ENCODE measurements at regions of chr2 and their contacts with region 1.

Region 1: DNA sequence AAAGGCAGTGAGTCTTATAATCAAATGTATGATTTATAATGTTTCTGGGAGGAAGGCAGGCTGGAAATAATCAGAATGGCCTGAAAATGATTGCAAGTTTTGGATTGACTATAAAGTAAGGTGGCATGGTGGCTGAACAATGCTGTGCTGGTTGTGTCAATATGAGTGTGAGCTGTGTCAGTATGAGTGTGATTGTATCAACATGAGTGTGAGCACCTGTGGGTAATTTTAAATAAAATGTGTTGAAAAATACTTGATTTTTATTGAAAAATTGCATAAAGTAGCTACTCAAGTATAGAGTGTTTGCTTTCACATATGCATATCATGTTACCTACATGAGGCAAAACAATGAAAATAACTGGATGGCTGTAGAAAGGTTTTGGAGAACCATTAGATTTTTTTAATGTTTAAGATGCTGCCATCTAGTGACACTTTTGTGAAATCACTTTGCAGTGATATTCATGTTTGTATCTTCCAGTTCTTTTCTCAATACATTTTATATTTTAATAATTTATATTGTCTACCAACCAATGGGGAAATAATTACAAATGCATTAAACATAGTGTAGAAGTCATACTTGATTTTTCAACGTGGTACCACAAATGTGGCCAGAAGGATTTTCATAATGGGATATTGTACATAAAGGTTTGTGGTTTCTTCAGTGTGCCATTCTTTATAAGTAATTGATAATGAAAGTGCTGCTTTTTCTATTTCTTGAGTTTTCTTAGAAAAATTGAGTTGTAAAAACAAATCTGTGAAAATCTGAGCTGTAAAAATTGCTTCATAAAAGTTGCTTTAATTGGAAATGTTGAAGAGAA is 103.3 kb downstream of the KYNU start:
- DNase-seq: peak; percentile 53
- H3K4me3 ChIP-seq: no peak overlapping the region
- H3K27ac ChIP-seq: no peak overlapping the region
- H3K4me1 ChIP-seq: peaks cover 2% of the 10 kb centered on the region
- H3K27me3 ChIP-seq: no peaks in the 10 kb centered on the region
- CTCF ChIP-seq: peak; percentile 18 to 25
- POLR2A ChIP-seq: no peak

Region 2: DNA sequence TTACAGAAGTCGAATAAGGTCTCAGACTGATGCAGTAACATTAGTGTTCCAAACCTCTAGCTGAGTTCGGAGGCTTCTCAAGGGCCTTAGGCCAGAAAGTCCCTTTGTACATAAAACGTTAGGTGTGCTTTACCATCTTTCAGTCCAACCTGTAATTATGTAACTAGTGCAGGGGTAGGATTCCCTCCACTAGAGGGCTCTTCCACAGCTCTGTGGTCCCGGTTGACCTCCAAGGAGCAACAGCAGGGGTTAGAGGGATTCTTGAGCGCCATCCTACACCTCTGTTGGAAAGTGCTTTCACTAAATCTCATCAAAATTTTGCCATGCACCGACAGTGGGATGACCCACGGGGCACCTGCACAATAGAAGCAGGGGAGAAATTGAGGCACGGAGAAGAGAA is 694.2 kb before region 1 on chr2:
- CTCF ChIA-PET with region 1: no interaction called
- POLR2A ChIA-PET with region 1: no interaction called
- dilution Hi-C with region 1: no loop called
- intact Hi-C with region 1: loop called (anchors 5 kb)
- DNase-seq: no peak
- H3K4me3 ChIP-seq: no peak overlapping the region
- H3K27ac ChIP-seq: no peak overlapping the region
- H3K4me1 ChIP-seq: no peaks in the 10 kb centered on the region
- H3K27me3 ChIP-seq: no peaks in the 10 kb centered on the region
- CTCF ChIP-seq: peak; percentile 10 to 24
- POLR2A ChIP-seq: no peak

Region 3: GRCh38 chr2:142682528-142682927 is 298.2 kb before region 1 on chr2:
- CTCF ChIA-PET with region 1: interaction called, 100 read pairs
- POLR2A ChIA-PET with region 1: no interaction called
- dilution Hi-C with region 1: no loop called
- intact Hi-C with region 1: loop called (anchors 1 kb)
- DNase-seq: peak; percentile 46
- H3K4me3 ChIP-seq: no peak overlapping the region
- H3K27ac ChIP-seq: no peak overlapping the region
- H3K4me1 ChIP-seq: no peaks in the 10 kb centered on the region
- H3K27me3 ChIP-seq: peaks cover 0 to 3% of the 10 kb centered on the region in 2 experiments
- CTCF ChIP-seq: no peak
- POLR2A ChIP-seq: no peak

Region 4: DNA sequence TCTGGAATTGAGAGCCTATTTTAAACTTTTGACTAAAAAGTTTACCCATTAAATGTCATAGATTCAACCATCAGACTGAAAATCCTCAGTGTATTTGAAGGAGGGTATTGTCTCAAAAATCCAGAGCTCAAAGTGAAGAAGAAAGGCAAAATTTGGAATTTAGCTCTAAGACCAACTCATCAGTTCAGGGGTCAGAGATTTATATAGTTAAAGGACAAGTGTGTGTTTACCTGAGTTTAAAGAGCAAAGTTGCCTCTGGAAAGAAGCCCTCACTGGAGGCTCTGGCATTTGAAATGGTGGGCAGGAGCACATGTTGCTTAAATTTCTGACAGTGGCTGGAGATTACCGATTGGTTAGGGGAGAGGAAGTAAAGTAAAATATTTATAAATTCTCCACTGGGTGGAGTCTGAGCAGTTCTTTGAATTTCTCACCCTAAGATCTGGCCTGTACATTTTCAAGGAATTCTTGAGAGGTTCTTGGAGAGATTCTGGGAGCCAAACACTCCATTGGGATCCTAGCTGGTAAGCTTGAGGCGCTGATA is 103.5 kb before region 1 on chr2 and contains the start of gene KYNU:
- CTCF ChIA-PET with region 1: interaction called, 17 read pairs
- POLR2A ChIA-PET with region 1: no interaction called
- dilution Hi-C with region 1: no loop called
- intact Hi-C with region 1: loop called (anchors 1 kb)
- DNase-seq: no peak
- H3K4me3 ChIP-seq: no peak within 1 kb of the TSS
- H3K27ac ChIP-seq: no peak within 1 kb of the TSS
- H3K4me1 ChIP-seq: peaks cover 23% of the 10 kb centered on the region
- H3K27me3 ChIP-seq: no peaks in the 10 kb centered on the region
- CTCF ChIP-seq: no peak
- POLR2A ChIP-seq: no peak
- total RNA-seq, gene KYNU: 0.25 TPM in 1 of 2 replicates, not detected in the other

Region 5: GRCh38 chr2:143001501-143001900 is 20.7 kb after region 1 on chr2:
- CTCF ChIA-PET with region 1: no interaction called
- POLR2A ChIA-PET with region 1: no interaction called
- dilution Hi-C with region 1: no loop called
- intact Hi-C with region 1: no loop called
- DNase-seq: no peak
- H3K4me3 ChIP-seq: no peak overlapping the region
- H3K27ac ChIP-seq: no peak overlapping the region
- H3K4me1 ChIP-seq: no peaks in the 10 kb centered on the region
- H3K27me3 ChIP-seq: peaks cover 0 to 10% of the 10 kb centered on the region in 2 experiments
- CTCF ChIP-seq: no peak
- POLR2A ChIP-seq: no peak